Activated CD8-positive, alpha-beta memory T cell treated with anti-CD3 and anti-CD28 coated beads, Interleukin-2, amount 10 ng/mL, durations not matched to agents 7 days and 5 days (primary cell): ENCODE measurements at regions of chr12 and their contacts with region 1.

Region 1: DNA sequence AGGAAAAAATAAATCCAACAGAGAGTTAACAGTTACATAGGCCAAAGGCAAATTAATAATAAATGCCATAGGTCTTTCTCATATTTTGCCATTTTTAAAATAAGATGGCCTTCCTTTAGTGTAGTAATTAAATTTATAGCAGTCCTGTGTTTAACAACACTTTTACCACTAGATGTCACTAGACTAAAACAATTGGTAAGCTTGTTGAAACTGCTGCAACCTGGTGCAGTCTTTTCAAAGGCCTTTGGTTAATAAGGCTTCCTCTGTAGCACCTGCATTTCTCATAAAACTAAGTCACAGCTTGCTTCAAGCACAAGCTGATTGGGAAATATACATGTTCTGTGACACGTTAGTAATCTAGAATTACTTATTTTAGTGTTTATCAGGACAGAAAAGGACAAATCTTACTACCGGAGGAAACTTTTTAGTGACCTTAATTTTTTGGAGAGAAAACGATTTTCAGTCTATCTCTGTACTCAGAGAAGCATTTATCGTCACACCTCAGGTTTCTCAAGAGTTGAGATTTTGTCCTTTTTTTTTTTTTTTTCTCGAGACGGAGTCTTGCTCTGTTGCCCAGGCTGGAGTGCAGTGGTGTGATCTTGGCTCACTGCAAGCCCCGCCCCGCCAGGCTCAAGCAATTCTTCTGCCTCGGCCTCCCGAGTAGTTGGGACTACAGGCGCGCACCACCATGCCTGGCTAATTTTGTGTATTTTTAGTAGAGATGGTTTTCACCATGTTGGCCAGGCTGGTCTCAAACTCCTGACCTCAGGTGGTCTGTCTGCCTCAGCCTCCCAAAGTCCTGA is 20.0 kb downstream of the BORCS5 start:
- DNase-seq: peak; percentile 51
- ATAC-seq: peak; percentile 56
- H3K4me3 Mint-ChIP-seq: no peak overlapping the region
- H3K27ac Mint-ChIP-seq: peak overlapping the region; percentile 21
- H3K4me1 Mint-ChIP-seq: peaks cover 50% of the 10 kb centered on the region
- H3K27me3 Mint-ChIP-seq: no peaks in the 10 kb centered on the region

Region 2: DNA sequence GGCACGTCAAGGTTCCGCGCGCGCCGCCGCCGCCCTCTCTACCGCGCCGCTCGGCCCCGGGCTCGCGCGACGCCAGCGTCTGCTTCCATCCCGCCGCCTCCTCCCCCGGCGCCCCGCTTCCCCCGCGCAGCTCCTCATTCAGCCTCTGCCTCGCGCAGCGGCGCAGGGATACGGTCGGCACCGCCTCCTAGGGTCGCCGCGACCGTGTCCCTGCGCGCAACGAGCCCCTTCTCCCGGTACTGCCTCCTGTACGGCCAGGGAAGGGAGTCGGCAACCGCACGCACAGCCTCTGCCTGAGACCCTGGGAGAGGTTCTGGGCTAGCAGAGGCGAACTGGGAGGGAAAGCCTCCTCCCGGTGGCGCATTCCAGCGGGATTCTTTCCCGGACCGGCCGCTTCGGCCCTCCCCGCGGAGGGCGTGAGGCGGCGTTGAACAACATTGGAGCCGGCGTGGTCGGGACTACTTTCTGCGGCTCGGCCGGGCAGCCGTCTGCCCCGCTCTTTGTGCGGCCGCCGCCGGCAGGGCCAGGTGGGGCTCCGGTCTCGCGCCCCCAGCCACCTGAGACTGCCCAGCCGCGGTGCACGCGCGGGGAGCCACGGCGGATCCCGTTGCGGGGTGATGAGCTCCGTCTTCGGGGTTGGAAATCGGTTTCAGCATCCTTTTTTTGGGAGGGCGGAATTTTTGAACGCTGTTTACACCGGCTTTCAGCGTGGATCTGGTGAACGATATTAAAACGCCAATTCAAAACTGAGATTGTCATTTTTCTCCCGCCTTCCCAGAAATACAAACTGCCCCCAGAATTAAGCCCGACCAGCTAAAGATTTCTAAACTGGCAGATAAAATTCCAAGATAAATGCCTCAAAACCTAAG is 109.7 kb before region 1 on chr12 and contains the start of gene LRP6:
- CTCF ChIA-PET with region 1: no interaction called
- DNase-seq: peak; percentile 45
- ATAC-seq: peak; percentile 77
- H3K4me3 Mint-ChIP-seq: peak within 1 kb of the TSS; percentile 61
- H3K27ac Mint-ChIP-seq: peak within 1 kb of the TSS; percentile 22
- H3K4me1 Mint-ChIP-seq: peaks cover 11% of the 10 kb centered on the region
- H3K27me3 Mint-ChIP-seq: peaks cover 65% of the 10 kb centered on the region
- total RNA-seq, gene LRP6: 0.28 TPM in 1 of 2 experiments, not detected in the other

Region 3: GRCh38 chr12:12365931-12366431 is 10.9 kb before region 1 on chr12:
- CTCF ChIA-PET with region 1: interaction called, 15 read pairs
- DNase-seq: peak; percentile 80
- ATAC-seq: peak; percentile 66
- H3K4me3 Mint-ChIP-seq: peak overlapping the region; percentile 25
- H3K27ac Mint-ChIP-seq: peak overlapping the region; percentile 81
- H3K4me1 Mint-ChIP-seq: peaks cover 53% of the 10 kb centered on the region
- H3K27me3 Mint-ChIP-seq: no peaks in the 10 kb centered on the region

Region 4: DNA sequence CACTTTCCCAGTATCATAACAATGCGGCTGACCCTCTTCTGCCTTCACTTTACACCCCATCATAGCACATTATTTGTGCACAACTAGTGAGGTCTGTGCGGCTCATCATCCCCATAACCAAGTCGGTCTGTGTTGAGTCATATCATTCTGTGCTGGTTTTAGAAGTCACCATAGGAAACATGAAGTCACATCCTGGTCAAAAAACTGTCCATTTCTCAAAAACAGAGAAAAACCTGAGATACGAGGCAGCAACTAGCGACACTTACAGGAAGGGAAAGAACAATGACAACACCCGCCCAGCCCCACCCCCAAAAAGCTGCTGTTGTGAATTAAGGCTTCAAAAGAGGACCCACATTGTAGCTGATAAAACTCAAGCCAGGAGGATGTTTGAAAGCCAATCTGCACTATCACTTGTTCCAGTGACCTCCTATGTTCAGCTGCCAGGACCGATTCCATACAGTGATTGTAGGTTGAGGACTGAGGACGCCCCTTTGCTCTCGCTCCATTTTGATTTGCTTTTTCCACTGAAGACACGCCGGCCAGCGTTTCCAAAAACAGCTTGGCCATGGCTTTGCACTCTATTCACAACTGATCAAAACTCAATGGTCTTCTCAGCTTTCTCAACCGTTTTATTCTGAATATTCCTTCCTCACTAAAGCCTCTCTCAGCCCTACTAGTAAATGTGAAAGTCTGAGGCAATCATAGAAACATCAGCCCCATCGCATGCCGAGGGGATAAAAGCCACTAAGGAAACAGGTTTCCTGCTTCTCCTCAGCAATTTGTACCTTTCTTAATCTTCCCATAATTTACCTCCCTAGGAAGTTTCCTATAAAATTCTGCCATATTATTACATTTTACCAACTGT is 98.3 kb after region 1 on chr12:
- CTCF ChIA-PET with region 1: interaction called, 18 read pairs
- DNase-seq: peak; percentile 89
- ATAC-seq: peak; percentile 86
- H3K4me3 Mint-ChIP-seq: peak overlapping the region; percentile 65
- H3K27ac Mint-ChIP-seq: peak overlapping the region; percentile 99
- H3K4me1 Mint-ChIP-seq: peaks cover 83% of the 10 kb centered on the region
- H3K27me3 Mint-ChIP-seq: no peaks in the 10 kb centered on the region

Region 5: GRCh38 chr12:12562585-12563261 is 185.9 kb after region 1 on chr12 and contains the start of gene DUSP16:
- CTCF ChIA-PET with region 1: interaction called, 41 read pairs
- DNase-seq: peak; percentile 91
- ATAC-seq: peak; percentile 89
- H3K4me3 Mint-ChIP-seq: peak within 1 kb of the TSS; percentile 81
- H3K27ac Mint-ChIP-seq: peak within 1 kb of the TSS; percentile 95
- H3K4me1 Mint-ChIP-seq: peaks cover 38% of the 10 kb centered on the region
- H3K27me3 Mint-ChIP-seq: no peaks in the 10 kb centered on the region
- total RNA-seq, gene DUSP16: 43.0 to 69.0 TPM

Region 6: DNA sequence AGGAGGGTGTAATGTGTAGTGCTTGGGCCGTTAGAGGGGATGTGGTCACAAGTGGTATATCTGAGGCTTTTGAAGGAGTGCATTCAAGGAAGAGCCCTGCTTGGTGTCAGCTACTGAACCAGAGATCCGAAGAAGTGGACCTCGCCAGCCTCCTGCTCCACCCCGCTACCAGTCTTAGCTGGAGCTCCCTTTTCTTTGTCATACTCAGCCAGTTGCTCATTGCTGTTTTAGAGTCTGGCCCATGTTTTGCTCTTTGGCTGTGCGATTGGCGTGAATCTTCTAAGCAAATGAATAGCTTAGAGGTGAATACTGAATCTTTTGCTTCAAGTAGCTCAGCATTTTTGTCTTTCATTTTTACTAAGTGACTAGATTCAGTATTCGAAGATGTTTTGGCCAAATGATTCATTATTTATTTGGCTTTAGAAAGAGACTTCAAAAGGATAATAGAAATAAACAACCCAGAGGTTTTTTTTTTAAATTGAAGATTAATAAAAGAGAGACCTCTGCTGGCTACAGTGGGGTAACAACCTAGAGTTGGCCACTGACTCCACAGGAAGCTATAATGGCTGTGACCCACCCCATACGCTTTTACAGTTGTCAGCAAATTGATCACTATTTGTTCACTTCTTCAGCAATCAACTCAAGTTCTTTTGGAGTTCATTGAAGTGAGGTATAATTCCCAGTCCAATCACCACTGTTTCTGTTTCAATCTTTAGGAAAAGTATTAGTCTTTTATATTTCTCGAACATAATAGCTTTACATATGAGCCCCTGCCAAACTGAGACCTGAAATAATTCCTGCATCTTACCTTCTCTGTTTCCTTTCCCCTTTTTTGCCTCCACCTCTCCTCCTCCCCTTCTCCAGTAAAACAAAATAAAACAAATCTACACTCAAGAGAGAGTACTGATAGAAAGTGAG is 360.2 kb after region 1 on chr12:
- CTCF ChIA-PET with region 1: interaction called, 24 read pairs
- DNase-seq: peak; percentile 90
- ATAC-seq: peak; percentile 90
- H3K4me3 Mint-ChIP-seq: peak overlapping the region; percentile 67
- H3K27ac Mint-ChIP-seq: peak overlapping the region; percentile 98
- H3K4me1 Mint-ChIP-seq: peaks cover 65% of the 10 kb centered on the region
- H3K27me3 Mint-ChIP-seq: no peaks in the 10 kb centered on the region